PC-3 (cell line): ENCODE measurements at regions of chr3 and their contacts with region 1.

Region 1: DNA sequence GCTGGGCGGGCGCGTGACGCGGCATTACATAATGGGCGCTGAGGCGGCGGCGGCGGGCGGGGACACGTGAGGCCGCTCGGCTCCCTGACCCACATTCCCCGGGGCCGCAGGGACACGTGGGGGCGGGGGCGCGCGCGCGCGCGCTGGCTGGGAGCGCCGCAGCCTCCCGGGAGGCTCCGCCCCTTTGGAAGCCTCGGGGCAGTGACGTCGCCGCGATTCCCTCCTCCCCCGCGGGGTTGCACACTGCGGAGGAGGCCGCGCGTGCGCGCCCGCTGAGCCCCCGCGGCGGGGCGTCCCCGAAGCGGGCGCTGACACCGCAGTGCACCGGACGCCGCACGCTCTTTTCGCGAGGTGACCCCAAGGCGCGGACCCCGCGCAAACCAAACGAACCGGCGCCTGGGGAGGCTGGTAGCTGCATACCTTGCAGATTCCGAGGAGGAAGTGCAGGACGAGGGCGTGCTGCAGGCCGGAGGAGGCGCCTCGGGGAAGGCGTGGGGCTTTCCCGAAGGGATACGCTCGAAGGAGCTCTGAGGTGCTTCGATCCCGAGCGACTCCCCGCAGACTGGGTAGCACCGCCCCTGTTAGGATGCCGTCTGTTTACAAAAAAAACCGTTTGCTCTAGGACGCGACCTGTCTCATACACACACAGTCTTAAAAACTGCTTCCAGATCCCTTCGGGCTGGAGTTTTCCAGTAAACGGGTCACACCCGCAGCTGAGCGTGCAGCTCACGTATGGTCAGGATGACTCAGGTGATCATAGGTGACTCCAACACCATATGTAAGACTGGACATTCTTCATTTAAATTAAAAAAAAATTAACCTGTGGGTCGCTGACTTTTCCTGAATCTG is 1.0 kb downstream of the NR1D2 start:
- DNase-seq: peak; percentile 97
- ATAC-seq: peak; percentile 70
- H3K4me3 ChIP-seq: peak overlapping the region; percentile 85
- H3K27ac ChIP-seq: peak overlapping the region; percentile 70
- H3K4me1 ChIP-seq: peaks cover 34% of the 10 kb centered on the region
- H3K27me3 ChIP-seq: no peaks in the 10 kb centered on the region
- CTCF ChIP-seq: no peak

Region 2: DNA sequence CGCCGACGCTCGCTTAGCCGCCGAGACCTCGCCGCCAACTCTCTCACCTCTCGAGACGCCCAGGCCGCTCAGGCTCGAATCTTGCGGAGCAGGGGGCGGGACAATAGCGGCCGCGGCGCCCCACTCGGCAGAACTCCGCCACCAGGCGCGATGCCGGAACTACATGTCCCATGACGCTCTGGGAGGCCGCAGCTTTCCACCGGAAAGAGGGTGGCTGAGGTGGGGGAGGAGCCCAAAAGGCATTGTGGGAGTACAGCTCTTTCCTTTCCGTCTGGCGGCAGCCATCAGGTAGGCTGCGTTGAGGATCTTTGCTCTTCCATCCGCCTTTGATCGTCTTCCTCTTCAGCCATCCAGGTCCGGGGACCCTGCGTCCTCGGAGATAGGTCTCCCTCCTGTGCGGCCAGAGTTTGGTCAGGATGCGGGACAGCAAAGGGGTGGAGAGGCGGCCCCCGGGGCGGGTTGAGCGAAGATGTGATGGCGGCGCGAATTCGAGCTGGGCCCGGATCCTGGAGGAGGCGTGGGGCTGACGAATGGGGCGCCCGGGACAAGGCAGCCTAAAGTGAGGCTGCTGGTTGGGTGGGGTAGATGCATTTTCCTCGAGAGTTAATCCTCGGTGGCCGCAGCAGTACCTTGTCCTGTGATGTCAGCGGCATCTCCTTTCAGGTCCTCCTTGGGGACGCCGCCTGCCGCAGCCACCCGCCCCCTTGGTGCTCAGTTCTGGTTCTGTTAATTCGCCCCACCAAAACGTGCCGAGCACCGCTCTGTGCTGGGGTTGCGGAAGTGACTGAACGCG is 29.0 kb before region 1 on chr3 and contains the starts of genes NKIRAS1 and RPL15:
- CTCF ChIA-PET with region 1: no interaction called
- POLR2A ChIA-PET with region 1: interaction called, 9 read pairs
- intact Hi-C with region 1: loop called (anchors 2 kb)
- DNase-seq: peak; percentile 98
- ATAC-seq: peak; percentile 91
- H3K4me3 ChIP-seq: peak within 1 kb of the TSS; percentile 91
- H3K27ac ChIP-seq: peak within 1 kb of the TSS; percentile 48
- H3K4me1 ChIP-seq: peaks cover 32% of the 10 kb centered on the region
- H3K27me3 ChIP-seq: no peaks in the 10 kb centered on the region
- CTCF ChIP-seq: no peak
- total RNA-seq, gene NKIRAS1: 12.7 and 14.9 TPM in 2 replicates
- total RNA-seq, gene RPL15: 1,500 and 1,904 TPM in 2 replicates

Region 3: GRCh38 chr3:24101676-24102168 is 155.6 kb after region 1 on chr3:
- CTCF ChIA-PET with region 1: no interaction called
- POLR2A ChIA-PET with region 1: no interaction called
- intact Hi-C with region 1: no loop called
- DNase-seq: peak; percentile 50
- ATAC-seq: peak; percentile 49
- H3K4me3 ChIP-seq: no peak overlapping the region
- H3K27ac ChIP-seq: no peak overlapping the region
- H3K4me1 ChIP-seq: peaks cover 9% of the 10 kb centered on the region; the same call in 1 of the 2 replicates
- H3K27me3 ChIP-seq: no peaks in the 10 kb centered on the region
- CTCF ChIP-seq: no peak